ENCODE measurements at regions of chr12 and their contacts with region 1.

Region 1: GRCh38 chr12:67720351-67720856 is 71.9 kb downstream of the DYRK2 start:
- DNase-seq: no peak
- H3K4me3 ChIP-seq: no peak overlapping the region
- CTCF ChIP-seq: no peak
- POLR2A ChIP-seq: no peak

Region 2: DNA sequence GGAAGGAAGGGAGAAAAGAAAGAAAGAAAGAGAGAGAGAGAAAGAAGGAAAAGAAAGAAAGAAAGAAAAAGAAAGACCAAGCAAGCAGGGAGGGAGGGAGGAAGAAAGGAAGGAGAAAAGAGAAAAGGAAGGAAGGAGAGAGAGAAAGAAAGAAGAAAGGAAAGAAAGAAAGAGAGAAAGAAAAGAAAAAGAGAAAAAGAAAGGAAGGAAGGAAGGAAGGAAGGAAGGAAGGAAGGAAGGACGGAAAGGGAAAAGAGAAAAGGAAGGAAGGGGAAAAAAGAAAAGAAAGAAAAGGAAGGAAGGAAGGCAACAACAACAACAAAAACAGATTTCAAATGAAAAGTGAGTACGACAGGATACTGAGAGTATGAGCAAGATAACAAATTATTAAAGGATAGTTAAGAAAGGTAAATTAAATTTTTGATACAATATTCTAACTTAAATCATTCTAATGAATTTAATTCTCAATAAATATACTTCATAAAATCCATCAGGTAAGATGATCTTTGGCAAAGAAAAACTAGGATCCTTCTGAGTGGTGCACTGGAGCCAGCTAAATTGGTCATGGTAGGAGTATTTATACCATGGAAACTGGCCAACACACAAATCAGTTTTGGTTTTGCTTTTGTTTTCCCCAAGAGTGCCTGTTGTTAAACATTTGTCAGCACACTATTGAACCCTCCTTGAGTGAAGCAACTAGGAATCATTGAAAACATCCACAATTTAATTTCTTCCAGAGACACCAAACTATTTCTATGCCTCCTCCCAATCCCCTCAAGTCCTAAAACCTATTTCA is 128.0 kb before region 1 on chr12:
- intact Hi-C with region 1: loop called (anchors 5 kb)
- DNase-seq: no peak
- H3K4me3 ChIP-seq: no peak overlapping the region
- CTCF ChIP-seq: no peak
- POLR2A ChIP-seq: no peak

Region 3: DNA sequence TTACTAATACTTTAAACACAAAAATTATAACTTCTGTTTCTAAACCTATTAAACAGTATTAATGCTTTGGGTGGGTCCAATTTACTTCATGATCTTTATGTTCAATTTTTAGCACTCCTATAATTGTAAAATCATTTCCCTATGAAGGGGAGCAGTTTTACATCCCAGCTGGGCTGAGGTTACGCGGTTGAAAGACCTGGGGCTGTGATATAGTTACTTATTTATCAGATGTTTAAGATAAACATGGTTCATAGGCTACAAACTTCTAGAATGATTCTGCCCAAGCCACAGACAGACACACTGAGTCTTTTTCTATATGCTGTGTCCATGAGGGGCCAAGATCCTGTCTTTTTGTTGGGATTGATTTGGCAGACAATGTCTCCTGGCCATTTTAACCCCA is 27.4 kb before region 1 on chr12:
- intact Hi-C with region 1: loop called (anchors 1 kb)
- DNase-seq: no peak
- H3K4me3 ChIP-seq: no peak overlapping the region
- CTCF ChIP-seq: no peak
- POLR2A ChIP-seq: no peak